Keratinocyte (primary cell): ENCODE measurements at regions of chr7 and their contacts with region 1.

Region 1: GRCh38 chr7:89072081-89072480 is 276.5 kb upstream of the TEX47 start:
- DNase-seq: no peak
- H3K4me3 ChIP-seq: no peak overlapping the region
- H3K27ac ChIP-seq: no peak overlapping the region
- H3K4me1 ChIP-seq: no peaks in the 10 kb centered on the region
- H3K27me3 ChIP-seq: no peaks in the 10 kb centered on the region
- CTCF ChIP-seq: no peak

Region 2: DNA sequence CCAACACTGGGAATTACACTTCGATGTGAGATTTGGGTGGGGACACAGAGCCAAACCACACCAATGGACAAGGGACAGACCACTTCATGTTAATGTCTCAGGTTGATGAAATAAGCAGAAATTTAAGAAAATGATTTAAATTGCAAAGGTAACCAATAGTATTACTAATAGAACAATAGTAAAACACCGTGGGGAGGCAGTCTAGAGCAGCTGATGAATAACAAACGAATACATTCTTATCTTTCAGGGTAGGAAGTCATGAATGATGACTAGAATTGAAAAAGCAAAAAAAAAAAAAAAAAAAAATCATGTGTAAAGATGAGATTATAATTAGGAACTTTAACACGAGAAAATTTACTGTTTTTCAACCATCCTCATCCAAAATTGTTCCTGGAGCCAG is 104.6 kb before region 1 on chr7:
- dilution Hi-C with region 1: no loop called
- DNase-seq: no peak
- H3K4me3 ChIP-seq: no peak overlapping the region
- H3K27ac ChIP-seq: no peak overlapping the region
- H3K4me1 ChIP-seq: no peaks in the 10 kb centered on the region
- H3K27me3 ChIP-seq: no peaks in the 10 kb centered on the region
- CTCF ChIP-seq: no peak

Region 3: GRCh38 chr7:89170628-89171027 is 98.5 kb after region 1 on chr7:
- dilution Hi-C with region 1: loop called (anchors 25 kb)
- DNase-seq: no peak
- H3K4me3 ChIP-seq: no peak overlapping the region
- H3K27ac ChIP-seq: no peak overlapping the region
- H3K4me1 ChIP-seq: no peaks in the 10 kb centered on the region
- H3K27me3 ChIP-seq: no peaks in the 10 kb centered on the region
- CTCF ChIP-seq: no peak